Activated CD4-positive, alpha-beta T cell treated with anti-CD3 and anti-CD28 coated beads, Interleukin-2, amount 10 ng/mL, durations not matched to agents 24 days and 14 days (primary cell): ENCODE measurements at regions of chr9 and their contacts with region 1.

Region 1: DNA sequence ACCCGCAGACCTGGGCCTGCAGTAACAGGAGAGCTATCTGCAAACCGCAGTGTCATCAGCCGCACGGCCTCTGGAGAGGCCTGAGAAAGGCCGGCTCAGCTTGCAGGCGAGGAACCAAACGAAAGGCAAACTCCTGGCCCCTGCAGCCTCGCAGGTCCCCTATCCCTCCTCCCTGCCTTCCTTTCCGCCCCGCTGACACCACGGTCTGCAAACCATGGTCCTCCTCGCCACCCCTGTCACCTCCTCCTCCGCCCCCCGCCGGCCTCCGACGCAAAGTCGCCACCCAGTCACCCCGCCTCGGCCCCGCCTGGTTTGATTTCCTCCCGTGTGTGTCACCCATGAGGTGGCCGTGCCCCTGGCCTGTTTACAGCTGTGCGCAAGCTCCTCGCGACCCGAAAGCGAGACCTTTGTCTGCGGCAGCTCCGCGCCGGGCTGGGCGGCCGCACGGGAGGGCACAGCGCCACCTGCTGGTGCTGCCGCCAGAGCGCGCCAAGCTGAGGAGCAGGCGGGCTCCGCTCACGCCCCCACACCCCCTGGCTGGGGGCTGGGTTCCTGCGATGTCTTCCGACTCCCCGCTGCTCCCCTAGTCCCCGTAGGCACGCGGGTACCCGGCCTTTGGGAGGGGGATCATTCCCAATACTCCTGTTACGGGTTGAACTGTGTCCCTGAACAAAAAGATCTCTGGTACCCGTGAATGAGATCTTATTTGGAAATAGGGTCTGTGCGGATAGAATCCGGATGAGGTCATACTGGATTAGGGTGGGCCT is 19.4 kb downstream of the GBGT1 start:
- DNase-seq: peak; percentile 98
- H3K4me3 Mint-ChIP-seq: peak overlapping the region; percentile 84
- H3K27ac Mint-ChIP-seq: peak overlapping the region; percentile 93
- H3K4me1 Mint-ChIP-seq: peaks cover 57% of the 10 kb centered on the region
- H3K27me3 Mint-ChIP-seq: no peaks in the 10 kb centered on the region

Region 2: DNA sequence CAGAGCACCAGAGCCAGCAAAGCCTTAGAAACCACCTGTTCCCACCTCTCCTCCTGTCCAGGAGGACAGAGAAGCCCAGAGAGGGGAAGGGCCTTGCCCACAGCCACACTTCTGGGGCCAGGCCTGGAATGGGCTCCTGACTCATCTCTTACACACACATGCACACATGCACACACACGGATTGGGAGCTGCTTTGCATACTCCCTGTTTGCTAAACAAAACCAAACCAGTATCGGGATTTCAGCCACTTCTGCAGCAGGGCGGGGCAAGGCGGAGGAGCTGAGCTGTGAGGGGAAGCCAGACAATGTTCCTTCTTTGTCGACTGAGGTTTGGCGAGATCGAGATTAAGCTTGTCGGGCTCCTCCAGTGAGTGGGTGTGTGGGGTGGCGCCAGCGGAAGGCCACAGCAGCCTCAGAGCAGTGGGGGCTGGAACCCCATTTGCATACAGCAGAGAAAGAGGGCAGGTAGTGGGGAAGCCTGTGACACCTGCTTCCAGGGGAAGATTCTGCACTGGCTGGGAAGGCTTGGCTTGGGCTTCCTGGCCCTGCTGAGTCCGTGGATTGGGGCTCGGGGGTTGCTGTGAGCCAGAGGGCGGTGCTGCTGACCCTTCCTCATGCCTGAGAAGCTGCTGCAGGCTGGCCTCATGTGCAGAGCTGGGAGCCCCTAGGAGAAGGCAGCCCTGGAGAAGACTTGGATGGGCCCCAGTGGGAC is 149.8 kb before region 1 on chr9:
- intact Hi-C with region 1: no loop called
- DNase-seq: no peak
- H3K4me3 Mint-ChIP-seq: no peak overlapping the region
- H3K27ac Mint-ChIP-seq: no peak overlapping the region
- H3K4me1 Mint-ChIP-seq: peaks cover 3% of the 10 kb centered on the region
- H3K27me3 Mint-ChIP-seq: peaks cover 22% of the 10 kb centered on the region

Region 3: DNA sequence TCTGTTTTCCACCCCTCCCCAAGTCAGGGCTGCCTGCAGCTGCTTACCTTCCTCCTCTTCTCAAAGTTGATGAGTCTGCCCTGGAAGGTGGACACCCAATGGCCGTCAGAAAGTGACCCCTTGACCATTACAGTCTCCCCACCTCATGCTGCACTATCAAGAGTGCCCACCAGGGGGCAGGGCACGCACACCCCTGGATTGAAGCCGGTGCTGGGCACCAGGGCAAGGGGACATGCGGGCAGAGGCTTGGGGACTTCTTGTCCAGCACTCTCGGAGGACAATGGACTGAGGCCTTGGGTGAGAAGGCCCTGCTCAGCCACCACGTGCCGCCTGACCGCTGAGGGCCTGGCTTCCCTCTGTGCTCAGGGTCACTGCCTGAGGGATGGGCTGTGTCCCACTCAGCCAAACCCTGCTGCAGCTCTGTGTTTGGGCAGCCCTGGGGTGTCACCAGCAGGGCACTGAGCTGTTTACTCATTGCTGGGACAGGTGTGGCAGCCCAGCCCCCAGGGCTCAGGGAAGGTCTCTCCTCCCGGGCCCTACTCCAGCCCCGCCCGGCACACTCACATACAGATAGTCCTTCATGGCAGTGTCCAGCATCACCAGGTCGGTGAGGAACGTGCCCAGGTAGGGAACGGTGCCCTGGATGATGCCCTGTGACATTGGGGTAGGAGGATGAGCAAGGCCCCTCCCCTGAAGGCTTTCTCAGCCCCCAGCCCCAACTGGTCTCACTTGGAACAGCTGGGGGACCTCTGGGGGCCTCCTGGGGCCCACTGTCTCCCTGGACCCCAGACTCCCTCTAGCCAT is 40.9 kb before region 1 on chr9:
- intact Hi-C with region 1: loop called (anchors 1 kb)
- DNase-seq: peak; percentile 88
- H3K4me3 Mint-ChIP-seq: no peak overlapping the region
- H3K27ac Mint-ChIP-seq: no peak overlapping the region
- H3K4me1 Mint-ChIP-seq: peaks cover 3% of the 10 kb centered on the region
- H3K27me3 Mint-ChIP-seq: no peaks in the 10 kb centered on the region

Region 4: GRCh38 chr9:133115448-133116345 is 28.6 kb before region 1 on chr9:
- intact Hi-C with region 1: loop called (anchors 1 kb)
- DNase-seq: peak; percentile 88
- H3K4me3 Mint-ChIP-seq: peak overlapping the region; percentile 73
- H3K27ac Mint-ChIP-seq: peak overlapping the region; percentile 91
- H3K4me1 Mint-ChIP-seq: peaks cover 48% of the 10 kb centered on the region
- H3K27me3 Mint-ChIP-seq: no peaks in the 10 kb centered on the region

Region 5: DNA sequence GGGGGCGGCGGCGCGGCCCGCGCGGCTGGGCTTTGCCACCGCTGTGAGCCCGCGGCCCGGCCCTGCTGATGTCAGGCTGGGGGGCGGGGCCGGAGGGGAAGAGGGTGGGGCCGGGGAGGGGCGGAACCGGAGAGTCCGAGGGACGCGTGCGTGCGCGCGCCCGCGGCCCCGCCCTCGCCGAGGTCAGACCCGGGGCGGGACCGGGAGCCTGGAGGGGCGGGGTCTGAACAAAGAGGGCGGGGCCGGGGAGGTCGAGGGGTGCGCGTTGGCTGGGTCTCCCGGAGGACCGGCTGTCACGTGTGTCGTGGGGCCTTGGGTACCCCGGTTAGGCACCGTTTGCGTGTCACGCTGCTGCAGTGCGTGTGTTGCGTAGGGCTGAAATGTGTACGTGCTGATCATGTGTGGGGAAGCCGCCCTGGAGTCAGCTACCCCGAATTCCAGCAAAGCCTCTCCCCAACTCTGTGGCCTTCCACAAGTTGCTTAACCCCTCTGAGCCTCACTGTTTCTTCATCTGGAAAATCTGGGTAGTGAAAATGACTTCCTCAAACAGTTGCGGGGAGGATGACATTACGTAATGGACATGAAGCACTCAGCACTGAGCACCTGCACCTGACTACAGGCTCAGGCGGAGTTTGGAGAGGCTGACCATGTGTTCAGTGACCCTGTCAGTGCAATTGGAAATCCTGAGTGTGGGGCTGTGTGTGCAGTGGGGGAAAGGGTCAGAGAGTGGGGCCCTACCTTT is 23.0 kb before region 1 on chr9 and contains the start of gene RALGDS:
- intact Hi-C with region 1: loop called (anchors 1 kb)
- DNase-seq: peak; percentile 96
- H3K4me3 Mint-ChIP-seq: peak within 1 kb of the TSS; percentile 84
- H3K27ac Mint-ChIP-seq: peak within 1 kb of the TSS; percentile 93
- H3K4me1 Mint-ChIP-seq: peaks cover 58% of the 10 kb centered on the region
- H3K27me3 Mint-ChIP-seq: no peaks in the 10 kb centered on the region
- total RNA-seq, gene RALGDS: 93.0 and 96.7 TPM in 2 replicates

Region 6: GRCh38 chr9:133133681-133134418 is 10.5 kb before region 1 on chr9:
- intact Hi-C with region 1: loop called (anchors 1 kb)
- DNase-seq: peak; percentile 97
- H3K4me3 Mint-ChIP-seq: peak overlapping the region; percentile 68
- H3K27ac Mint-ChIP-seq: peak overlapping the region; percentile 100
- H3K4me1 Mint-ChIP-seq: peaks cover 61% of the 10 kb centered on the region
- H3K27me3 Mint-ChIP-seq: no peaks in the 10 kb centered on the region